Activated CD4-positive, alpha-beta T cell treated with anti-CD3 and anti-CD28 coated beads for 36 hours (primary cell): ENCODE measurements at regions of chr11 and their contacts with region 1.

Region 1: DNA sequence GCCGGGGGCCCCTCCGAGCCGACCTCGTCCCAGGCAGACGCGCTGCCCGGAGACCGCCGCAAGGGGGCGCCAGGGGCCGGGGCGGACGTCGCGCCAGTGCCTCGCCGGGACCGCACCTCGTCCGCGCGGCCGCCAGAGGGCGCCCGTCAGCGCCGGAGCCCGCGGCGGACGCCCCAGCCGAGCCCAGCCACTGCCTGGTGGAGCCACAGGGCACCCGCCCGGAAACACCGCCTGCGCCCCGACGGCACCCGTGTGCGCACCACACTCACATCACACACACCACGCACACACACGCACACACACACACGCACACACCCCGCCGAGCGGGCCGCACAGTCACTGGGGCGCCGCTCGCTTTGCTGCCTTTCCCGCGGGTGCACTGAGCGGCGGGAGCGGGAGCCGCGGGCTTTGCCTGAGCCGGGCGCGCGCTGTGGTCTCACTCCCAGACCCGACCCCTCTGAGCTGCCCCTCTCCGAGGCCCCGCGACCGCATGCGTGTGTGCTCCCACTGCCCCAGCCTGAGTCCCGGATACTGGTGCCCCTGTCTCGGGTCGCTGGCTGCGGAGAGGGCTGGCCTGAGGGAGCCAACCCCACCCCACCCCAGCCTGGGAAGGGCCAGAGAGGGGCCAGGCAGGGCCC is 449.3 kb downstream of the OPCML start:
- DNase-seq: peak; percentile 85
- ATAC-seq: peak; percentile 98
- H3K4me3 Mint-ChIP-seq: peak overlapping the region; percentile 26
- H3K27ac Mint-ChIP-seq: no peak overlapping the region
- H3K4me1 Mint-ChIP-seq: no peaks in the 10 kb centered on the region
- H3K27me3 Mint-ChIP-seq: peaks cover 43% of the 10 kb centered on the region

Region 2: GRCh38 chr11:132831272-132831671 is 251.7 kb before region 1 on chr11:
- CTCF ChIA-PET with region 1: no interaction called
- POLR2A ChIA-PET with region 1: no interaction called
- intact Hi-C with region 1: no loop called
- DNase-seq: no peak
- ATAC-seq: no peak
- H3K4me3 Mint-ChIP-seq: no peak overlapping the region
- H3K27ac Mint-ChIP-seq: no peak overlapping the region
- H3K4me1 Mint-ChIP-seq: no peaks in the 10 kb centered on the region
- H3K27me3 Mint-ChIP-seq: peaks cover 3% of the 10 kb centered on the region

Region 3: GRCh38 chr11:133163463-133164419 is 80.8 kb after region 1 on chr11:
- CTCF ChIA-PET with region 1: no interaction called
- POLR2A ChIA-PET with region 1: no interaction called
- intact Hi-C with region 1: loop called in 1 of 2 experiments (anchors 1 kb)
- DNase-seq: no peak
- ATAC-seq: peak; percentile 36
- H3K4me3 Mint-ChIP-seq: no peak overlapping the region
- H3K27ac Mint-ChIP-seq: no peak overlapping the region
- H3K4me1 Mint-ChIP-seq: no peaks in the 10 kb centered on the region
- H3K27me3 Mint-ChIP-seq: peaks cover 10% of the 10 kb centered on the region

Region 4: DNA sequence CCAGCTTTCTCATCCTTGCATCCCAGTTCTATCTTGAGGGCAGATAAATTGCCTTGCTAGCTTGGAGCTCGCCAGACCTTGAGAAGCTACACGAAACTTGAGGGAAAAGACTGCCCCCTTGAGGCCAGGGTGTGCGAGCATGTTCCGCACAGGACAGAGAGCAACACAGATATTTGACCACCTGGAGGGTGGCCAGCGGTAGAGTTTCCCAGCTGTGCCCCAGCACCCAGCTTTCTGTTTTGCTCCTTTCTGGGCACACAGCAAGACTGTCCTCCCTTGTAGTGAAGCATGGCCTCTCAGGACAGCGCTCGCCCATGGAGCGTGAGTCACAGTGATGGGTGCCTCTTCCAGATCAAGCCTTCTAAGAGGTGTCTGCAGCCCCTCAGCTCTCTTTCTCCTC is 738.8 kb after region 1 on chr11:
- CTCF ChIA-PET with region 1: no interaction called
- POLR2A ChIA-PET with region 1: no interaction called
- intact Hi-C with region 1: loop called in 1 of 2 experiments (anchors 1 kb)
- DNase-seq: peak; percentile 66
- ATAC-seq: peak; percentile 44
- H3K4me3 Mint-ChIP-seq: no peak overlapping the region
- H3K27ac Mint-ChIP-seq: no peak overlapping the region
- H3K4me1 Mint-ChIP-seq: no peaks in the 10 kb centered on the region
- H3K27me3 Mint-ChIP-seq: peaks cover 2% of the 10 kb centered on the region

Region 5: GRCh38 chr11:133834682-133835592 is 752.0 kb after region 1 on chr11:
- CTCF ChIA-PET with region 1: interaction called, 7 read pairs
- POLR2A ChIA-PET with region 1: no interaction called
- intact Hi-C with region 1: loop called (anchors 1 to 2 kb)
- DNase-seq: peak; percentile 78
- ATAC-seq: peak; percentile 85
- H3K4me3 Mint-ChIP-seq: no peak overlapping the region
- H3K27ac Mint-ChIP-seq: peak overlapping the region; percentile 10
- H3K4me1 Mint-ChIP-seq: peaks cover 11% of the 10 kb centered on the region
- H3K27me3 Mint-ChIP-seq: peaks cover 11% of the 10 kb centered on the region